ENCODE measurements at regions of chr6 and their contacts with region 1.

Region 1: DNA sequence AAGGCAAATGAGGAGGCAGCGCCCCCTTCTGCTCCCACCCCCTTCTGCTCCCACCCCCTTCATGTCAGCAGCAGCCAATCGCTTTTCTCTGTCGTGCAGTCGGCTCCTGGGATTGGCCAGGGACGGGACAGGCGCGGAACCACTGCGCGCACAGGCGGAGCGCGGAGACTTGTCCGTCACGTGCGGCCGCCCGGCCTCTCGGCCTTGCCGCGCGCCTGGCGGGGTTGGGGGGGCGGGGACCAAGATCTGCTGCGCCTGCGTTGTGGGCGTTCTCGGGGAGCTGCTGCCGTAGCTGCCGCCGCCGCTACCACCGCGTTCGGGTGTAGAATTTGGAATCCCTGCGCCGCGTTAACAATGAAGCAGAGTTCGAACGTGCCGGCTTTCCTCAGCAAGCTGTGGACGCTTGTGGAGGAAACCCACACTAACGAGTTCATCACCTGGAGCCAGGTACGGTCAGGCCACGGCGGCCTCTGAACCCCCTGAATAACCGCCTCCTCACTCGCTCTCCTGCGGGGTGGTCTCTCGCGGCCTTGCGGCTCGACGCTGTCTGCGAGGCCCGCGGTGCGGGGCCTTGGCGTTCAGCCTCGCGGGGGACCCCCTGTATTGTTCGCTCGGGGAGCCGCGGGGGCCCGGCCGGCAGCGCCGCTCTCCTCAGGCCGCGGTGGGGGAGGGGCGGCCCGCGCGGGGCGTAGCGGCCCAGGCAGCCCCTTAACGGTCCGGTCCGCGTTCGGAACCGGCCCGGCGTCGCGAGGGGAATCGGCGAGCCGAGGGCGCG is at the start of gene HSF2:
- DNase-seq: peak; percentile 97
- ATAC-seq: peak; percentile 98
- H3K4me3 Mint-ChIP-seq: peak within 1 kb of the TSS; percentile 94
- H3K27ac Mint-ChIP-seq: peak within 1 kb of the TSS; percentile 96
- H3K4me1 Mint-ChIP-seq: peaks cover 43% of the 10 kb centered on the region
- H3K27me3 Mint-ChIP-seq: no peaks in the 10 kb centered on the region
- total RNA-seq, gene HSF2: 18.1 to 20.6 TPM

Region 2: DNA sequence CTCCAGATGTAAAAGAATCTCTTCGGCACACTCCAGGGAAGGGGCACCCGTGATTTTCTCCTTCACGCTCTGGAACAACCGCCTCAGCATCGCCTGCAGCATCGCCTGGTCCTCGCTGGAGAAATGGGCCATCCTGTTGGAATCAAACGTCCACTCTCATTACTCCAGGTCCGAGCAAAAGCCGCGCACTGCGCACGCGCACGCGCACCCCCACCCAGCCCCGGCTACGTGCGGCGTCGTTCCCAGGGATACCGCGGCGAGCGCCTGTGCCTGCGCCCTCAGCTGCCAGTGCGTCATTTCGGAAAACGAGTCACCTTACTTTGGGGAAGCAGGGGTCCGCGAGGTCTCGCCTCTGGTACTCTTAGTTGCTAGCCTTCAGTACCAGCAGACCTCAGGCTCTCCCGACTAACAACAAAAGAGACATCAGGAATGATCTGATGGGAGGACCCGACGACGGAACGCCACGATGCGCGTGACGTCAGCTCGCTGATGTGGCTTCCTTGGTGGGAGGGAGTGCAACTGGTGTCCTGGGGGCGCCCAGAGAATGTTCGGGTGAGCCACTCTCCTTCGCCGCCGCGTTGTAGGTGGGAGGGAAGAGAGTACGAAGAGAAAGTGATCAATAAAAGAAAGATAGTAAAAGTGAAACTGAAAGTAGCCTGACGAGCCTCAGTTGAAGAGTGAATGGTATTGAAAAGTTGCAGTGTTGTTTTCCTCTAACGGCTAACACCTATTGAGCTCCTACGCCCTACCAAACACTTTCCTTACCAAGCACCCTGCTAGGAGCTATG is 1065.1 kb before region 1 on chr6 and contains the start of gene TBC1D32:
- CTCF ChIA-PET with region 1: no interaction called
- POLR2A ChIA-PET with region 1: no interaction called
- intact Hi-C with region 1: loop called in 1 of 2 experiments (anchors 10 kb)
- DNase-seq: peak; percentile 93
- ATAC-seq: peak; percentile 92
- H3K4me3 Mint-ChIP-seq: peak within 1 kb of the TSS; percentile 94
- H3K27ac Mint-ChIP-seq: peak within 1 kb of the TSS; percentile 98
- H3K4me1 Mint-ChIP-seq: peaks cover 33% of the 10 kb centered on the region
- H3K27me3 Mint-ChIP-seq: no peaks in the 10 kb centered on the region
- total RNA-seq, gene TBC1D32: 9.2 to 9.9 TPM

Region 3: DNA sequence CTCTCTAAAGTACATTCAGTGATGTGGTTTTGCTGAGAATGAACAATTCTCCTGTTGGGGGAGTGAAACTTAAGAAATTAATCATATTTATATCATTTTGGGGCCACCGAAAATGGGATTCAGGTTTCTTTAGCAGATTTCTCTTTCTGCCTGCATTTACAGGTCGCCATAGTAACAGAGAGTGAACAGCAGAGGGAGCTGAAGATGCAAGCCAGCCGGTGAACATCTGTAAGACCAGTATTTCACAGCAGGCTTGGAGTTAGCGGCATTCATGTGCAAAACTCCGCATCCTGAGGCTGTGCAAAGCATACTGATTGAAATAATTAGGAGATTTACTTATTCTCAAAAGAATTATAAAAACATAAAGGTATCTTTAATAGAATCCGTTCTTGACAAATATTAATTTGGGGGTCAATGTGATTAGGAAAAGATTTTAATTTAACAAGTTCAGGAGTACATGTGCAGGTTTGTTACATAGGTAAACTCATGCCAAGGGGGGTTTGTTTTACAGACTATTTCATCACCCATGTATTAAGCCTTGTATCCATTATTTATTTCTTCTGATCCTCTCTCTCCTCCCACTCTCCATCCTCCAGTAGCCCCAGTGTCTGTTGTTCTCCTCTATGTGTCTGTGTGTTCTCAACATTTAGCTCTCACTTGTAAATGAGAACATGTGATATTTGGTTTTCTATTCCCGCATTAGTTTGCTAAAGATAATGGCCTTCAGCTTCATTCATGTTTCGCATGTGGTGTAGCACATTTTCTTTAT is 17.9 kb before region 1 on chr6:
- CTCF ChIA-PET with region 1: interaction called, 5 read pairs
- POLR2A ChIA-PET with region 1: interaction called, 3 read pairs
- intact Hi-C with region 1: loop called in 1 of 2 experiments (anchors 1 kb)
- DNase-seq: peak; percentile 74
- ATAC-seq: peak; percentile 99
- H3K4me3 Mint-ChIP-seq: no peak overlapping the region
- H3K27ac Mint-ChIP-seq: no peak overlapping the region
- H3K4me1 Mint-ChIP-seq: peaks cover 6% of the 10 kb centered on the region
- H3K27me3 Mint-ChIP-seq: peaks cover 8% of the 10 kb centered on the region

Region 4: GRCh38 chr6:122422614-122423267 is 23.2 kb after region 1 on chr6:
- CTCF ChIA-PET with region 1: interaction called, 3 read pairs
- POLR2A ChIA-PET with region 1: no interaction called
- intact Hi-C with region 1: loop called (anchors 2 kb)
- DNase-seq: no peak
- ATAC-seq: peak; percentile 79
- H3K4me3 Mint-ChIP-seq: no peak overlapping the region
- H3K27ac Mint-ChIP-seq: no peak overlapping the region
- H3K4me1 Mint-ChIP-seq: peaks cover 15% of the 10 kb centered on the region
- H3K27me3 Mint-ChIP-seq: no peaks in the 10 kb centered on the region

Measured in activated CD4-positive, alpha-beta T cell treated with anti-CD3 and anti-CD28 coated beads for 36 hours (primary cell).